CD8-positive, alpha-beta T cell (primary cell): ENCODE measurements at regions of chr6 and their contacts with region 1.

Region 1: DNA sequence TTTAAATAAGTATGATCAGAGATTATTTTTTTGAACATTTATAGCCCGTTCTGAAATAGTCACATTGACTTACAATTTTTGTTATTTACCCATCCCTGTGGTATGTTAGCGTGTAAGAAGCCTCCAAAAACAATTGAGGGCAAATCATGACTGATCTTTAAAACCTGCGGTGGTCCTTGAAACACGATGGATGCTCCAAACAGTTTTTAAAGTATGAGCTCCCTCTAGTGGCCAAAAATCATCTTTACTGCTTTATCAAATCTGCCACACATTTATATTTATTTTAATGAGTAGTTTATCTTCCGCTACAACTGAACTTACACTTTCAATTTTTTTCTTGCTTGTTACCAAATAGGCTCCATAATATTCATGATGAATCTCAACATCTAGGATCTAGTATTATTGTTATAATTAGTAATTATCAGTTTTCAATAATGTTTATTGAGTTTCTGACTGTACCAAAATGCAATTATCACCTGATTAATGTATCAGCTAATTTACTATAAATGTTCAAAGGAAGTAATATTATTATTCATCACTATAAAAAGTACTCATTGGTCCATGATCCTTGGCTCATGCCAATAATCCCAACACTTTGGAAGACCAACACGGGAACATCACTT is 52.2 kb downstream of the MARCKS start:
- DNase-seq: peak in 3 of 9 experiments; percentile 20 to 65 (median 49)
- ATAC-seq: peak; percentile 44
- H3K4me3 ChIP-seq: no peak overlapping the region
- H3K4me3 Mint-ChIP-seq: no peak overlapping the region
- H3K27ac ChIP-seq: no peak overlapping the region
- H3K27ac Mint-ChIP-seq: no peak overlapping the region
- H3K4me1 ChIP-seq: no peaks in the 10 kb centered on the region
- H3K4me1 Mint-ChIP-seq: no peaks in the 10 kb centered on the region
- H3K27me3 ChIP-seq: no peaks in the 10 kb centered on the region
- H3K27me3 Mint-ChIP-seq: peaks cover 5% of the 10 kb centered on the region
- CTCF ChIP-seq: peak; percentile 73

Region 2: GRCh38 chr6:112180095-112180820 is 1729.1 kb before region 1 on chr6:
- CTCF ChIA-PET with region 1: interaction called, 19 read pairs
- POLR2A ChIA-PET with region 1: no interaction called
- intact Hi-C with region 1: loop called in 1 of 2 experiments (anchors 2 kb)
- DNase-seq: peak in 7 of 9 experiments; percentile 17 to 88 (median 52)
- ATAC-seq: peak; percentile 58
- H3K4me3 ChIP-seq: no peak overlapping the region
- H3K4me3 Mint-ChIP-seq: no peak overlapping the region
- H3K27ac ChIP-seq: no peak overlapping the region
- H3K27ac Mint-ChIP-seq: no peak overlapping the region
- H3K4me1 ChIP-seq: no peaks in the 10 kb centered on the region
- H3K4me1 Mint-ChIP-seq: no peaks in the 10 kb centered on the region
- H3K27me3 ChIP-seq: peaks cover 0 to 3% of the 10 kb centered on the region in 2 experiments
- H3K27me3 Mint-ChIP-seq: peaks cover 27% of the 10 kb centered on the region
- CTCF ChIP-seq: peak; percentile 84

Region 3: GRCh38 chr6:113306552-113307145 is 602.7 kb before region 1 on chr6:
- CTCF ChIA-PET with region 1: no interaction called
- POLR2A ChIA-PET with region 1: no interaction called
- intact Hi-C with region 1: loop called in 1 of 2 experiments (anchors 10 kb)
- DNase-seq: peak in 6 of 9 experiments; percentile 11 to 48 (median 25)
- ATAC-seq: no peak
- H3K4me3 ChIP-seq: no peak overlapping the region
- H3K4me3 Mint-ChIP-seq: no peak overlapping the region
- H3K27ac ChIP-seq: no peak overlapping the region
- H3K27ac Mint-ChIP-seq: no peak overlapping the region
- H3K4me1 ChIP-seq: no peaks in the 10 kb centered on the region
- H3K4me1 Mint-ChIP-seq: no peaks in the 10 kb centered on the region
- H3K27me3 ChIP-seq: no peaks in the 10 kb centered on the region
- H3K27me3 Mint-ChIP-seq: no peaks in the 10 kb centered on the region
- CTCF ChIP-seq: peak; percentile 13

Region 4: DNA sequence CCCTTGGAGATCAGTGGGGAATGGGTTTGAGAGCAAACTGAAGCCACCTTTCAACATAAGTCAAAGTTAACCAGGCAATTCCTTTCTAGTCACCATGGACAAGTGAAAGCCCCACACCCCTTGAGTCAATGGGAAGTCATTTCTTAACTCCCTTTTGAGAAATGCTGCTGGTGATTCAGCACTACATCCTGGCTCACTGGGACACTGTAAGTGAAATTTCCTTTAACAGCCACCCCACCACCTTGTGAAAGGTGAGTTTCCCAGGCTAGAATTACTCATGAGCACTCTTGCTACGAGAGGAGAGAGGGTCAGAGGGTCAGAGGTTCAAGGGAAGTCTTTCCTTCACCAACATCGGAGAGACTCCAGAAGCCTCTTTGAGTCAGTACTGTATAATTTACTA is 145.5 kb before region 1 on chr6:
- CTCF ChIA-PET with region 1: no interaction called
- POLR2A ChIA-PET with region 1: no interaction called
- intact Hi-C with region 1: no loop called
- DNase-seq: peak in 1 of 9 experiments; percentile 25
- ATAC-seq: no peak
- H3K4me3 ChIP-seq: no peak overlapping the region
- H3K4me3 Mint-ChIP-seq: no peak overlapping the region
- H3K27ac ChIP-seq: no peak overlapping the region
- H3K27ac Mint-ChIP-seq: no peak overlapping the region
- H3K4me1 ChIP-seq: no peaks in the 10 kb centered on the region
- H3K4me1 Mint-ChIP-seq: no peaks in the 10 kb centered on the region
- H3K27me3 ChIP-seq: no peaks in the 10 kb centered on the region
- H3K27me3 Mint-ChIP-seq: no peaks in the 10 kb centered on the region
- CTCF ChIP-seq: no peak

Region 5: GRCh38 chr6:113888493-113888892 is 20.9 kb before region 1 on chr6:
- CTCF ChIA-PET with region 1: interaction called, 10 read pairs
- POLR2A ChIA-PET with region 1: no interaction called
- intact Hi-C with region 1: no loop called
- DNase-seq: no peak
- ATAC-seq: no peak
- H3K4me3 ChIP-seq: no peak overlapping the region
- H3K4me3 Mint-ChIP-seq: no peak overlapping the region
- H3K27ac ChIP-seq: no peak overlapping the region
- H3K27ac Mint-ChIP-seq: no peak overlapping the region
- H3K4me1 ChIP-seq: no peaks in the 10 kb centered on the region
- H3K4me1 Mint-ChIP-seq: no peaks in the 10 kb centered on the region
- H3K27me3 ChIP-seq: no peaks in the 10 kb centered on the region
- H3K27me3 Mint-ChIP-seq: peaks cover 8% of the 10 kb centered on the region
- CTCF ChIP-seq: no peak

Region 6: GRCh38 chr6:113920663-113921267 is 11.4 kb after region 1 on chr6:
- CTCF ChIA-PET with region 1: interaction called, 14 read pairs
- POLR2A ChIA-PET with region 1: interaction called, 3 read pairs
- intact Hi-C with region 1: no loop called
- DNase-seq: peak in 2 of 9 experiments; percentile 5 to 17
- ATAC-seq: no peak
- H3K4me3 ChIP-seq: no peak overlapping the region
- H3K4me3 Mint-ChIP-seq: no peak overlapping the region
- H3K27ac ChIP-seq: no peak overlapping the region
- H3K27ac Mint-ChIP-seq: no peak overlapping the region
- H3K4me1 ChIP-seq: peaks cover 9% of the 10 kb centered on the region
- H3K4me1 Mint-ChIP-seq: peaks cover 15% of the 10 kb centered on the region
- H3K27me3 ChIP-seq: no peaks in the 10 kb centered on the region
- H3K27me3 Mint-ChIP-seq: peaks cover 3% of the 10 kb centered on the region
- CTCF ChIP-seq: no peak

Region 7: DNA sequence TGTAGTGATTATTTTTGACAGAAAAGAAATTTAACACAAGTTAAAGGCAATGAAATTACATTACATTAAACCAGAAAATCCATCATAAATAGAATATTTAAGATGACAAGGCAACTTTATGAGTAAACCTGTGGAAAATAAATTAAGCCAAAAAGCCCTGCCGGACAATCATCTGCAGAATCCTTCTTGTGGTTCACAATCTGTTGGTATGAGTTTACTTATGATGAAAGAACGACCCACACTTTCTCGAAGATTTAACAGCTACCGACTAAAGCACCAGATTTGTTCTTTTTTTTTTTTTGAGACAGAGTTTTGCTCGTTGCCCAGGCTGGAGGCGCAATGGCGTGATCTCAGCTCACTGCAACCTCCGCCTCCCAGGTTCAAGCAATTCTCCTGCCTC is 40.2 kb after region 1 on chr6:
- CTCF ChIA-PET with region 1: no interaction called
- POLR2A ChIA-PET with region 1: no interaction called
- intact Hi-C with region 1: no loop called
- DNase-seq: no peak
- ATAC-seq: no peak
- H3K4me3 ChIP-seq: no peak overlapping the region
- H3K4me3 Mint-ChIP-seq: no peak overlapping the region
- H3K27ac ChIP-seq: no peak overlapping the region
- H3K27ac Mint-ChIP-seq: no peak overlapping the region
- H3K4me1 ChIP-seq: no peaks in the 10 kb centered on the region
- H3K4me1 Mint-ChIP-seq: peaks cover 2% of the 10 kb centered on the region
- H3K27me3 ChIP-seq: no peaks in the 10 kb centered on the region
- H3K27me3 Mint-ChIP-seq: no peaks in the 10 kb centered on the region
- CTCF ChIP-seq: no peak